Natural killer cell (primary cell): ENCODE measurements at regions of chr2 and their contacts with region 1.

Region 1: GRCh38 chr2:214809751-214810564 is 475 bp upstream of the BARD1 start:
- DNase-seq: peak; percentile 96 to 97
- ATAC-seq: peak; percentile 87 to 96 (median 88)
- H3K4me3 ChIP-seq: peak overlapping the region; percentile 98
- H3K4me3 Mint-ChIP-seq: peak overlapping the region; percentile 98
- H3K27ac ChIP-seq: peak overlapping the region; percentile 68
- H3K27ac Mint-ChIP-seq: peak overlapping the region; percentile 91 to 92
- H3K4me1 ChIP-seq: peaks cover 9% of the 10 kb centered on the region
- H3K4me1 Mint-ChIP-seq: peaks cover 16 to 37% of the 10 kb centered on the region in 2 donors
- H3K27me3 ChIP-seq: no peaks in the 10 kb centered on the region
- H3K27me3 Mint-ChIP-seq: peaks cover 0 to 9% of the 10 kb centered on the region in 2 donors
- CTCF ChIP-seq: no peak

Region 2: DNA sequence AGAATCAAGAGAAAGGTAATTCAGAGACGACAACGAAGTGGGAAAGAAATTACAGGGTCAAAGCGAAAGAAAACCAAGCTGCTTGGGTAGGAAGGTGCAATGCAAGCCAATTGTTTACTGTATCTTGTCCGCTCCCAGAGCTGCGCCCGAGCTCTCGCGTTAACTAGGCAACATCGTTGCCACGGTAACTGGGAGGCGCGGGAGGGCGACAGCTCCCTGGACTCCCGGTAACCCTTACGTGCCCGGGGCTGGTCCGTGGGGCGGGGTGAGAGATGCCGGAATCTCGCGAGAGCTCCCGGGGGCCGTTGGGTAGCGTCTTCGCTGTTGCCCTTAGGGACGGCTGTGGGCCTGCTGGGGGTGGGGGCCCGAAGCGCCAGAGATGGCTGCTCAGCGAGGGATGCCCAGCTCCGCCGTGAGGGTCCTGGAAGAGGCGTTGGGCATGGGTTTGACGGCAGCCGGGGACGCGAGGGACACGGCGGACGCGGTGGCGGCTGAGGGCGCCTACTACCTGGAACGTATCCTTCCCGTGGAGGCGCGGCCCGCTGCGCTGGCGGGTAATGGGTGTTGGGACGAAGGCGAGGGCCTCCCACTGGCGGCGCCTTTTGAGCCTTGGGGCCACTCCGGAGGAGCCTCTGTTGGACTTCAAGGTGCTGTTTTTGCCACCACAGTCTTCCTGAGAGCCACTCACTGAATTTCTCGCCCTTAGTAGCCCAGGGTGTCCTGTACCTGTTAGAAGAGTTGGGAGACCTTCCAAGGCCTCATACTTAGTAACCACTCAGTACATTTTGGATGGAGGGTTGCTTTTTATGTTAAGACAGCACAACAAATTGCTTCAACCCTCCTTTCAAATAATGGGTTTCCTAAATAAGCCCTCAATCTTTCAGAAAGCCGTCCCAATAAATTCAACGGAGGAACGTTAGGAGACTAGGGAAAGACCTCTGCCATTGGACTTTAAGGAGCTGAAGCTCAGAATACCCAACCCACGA is 1525.6 kb before region 1 on chr2 and contains the start of gene SPAG16:
- intact Hi-C with region 1: loop called (anchors 5 kb)
- DNase-seq: peak; percentile 88 to 97
- ATAC-seq: peak; percentile 95 to 98 (median 95)
- H3K4me3 ChIP-seq: peak within 1 kb of the TSS; percentile 65
- H3K4me3 Mint-ChIP-seq: peak within 1 kb of the TSS; percentile 93
- H3K27ac ChIP-seq: peak within 1 kb of the TSS; percentile 57
- H3K27ac Mint-ChIP-seq: peak within 1 kb of the TSS; percentile 85 to 93
- H3K4me1 ChIP-seq: peaks cover 6% of the 10 kb centered on the region
- H3K4me1 Mint-ChIP-seq: peaks cover 35 to 37% of the 10 kb centered on the region in 2 donors
- H3K27me3 ChIP-seq: no peaks in the 10 kb centered on the region
- H3K27me3 Mint-ChIP-seq: peaks cover 0 to 9% of the 10 kb centered on the region in 2 donors
- CTCF ChIP-seq: no peak
- total RNA-seq, gene SPAG16: 3.5 to 5.8 (median 4.0) TPM

Region 3: DNA sequence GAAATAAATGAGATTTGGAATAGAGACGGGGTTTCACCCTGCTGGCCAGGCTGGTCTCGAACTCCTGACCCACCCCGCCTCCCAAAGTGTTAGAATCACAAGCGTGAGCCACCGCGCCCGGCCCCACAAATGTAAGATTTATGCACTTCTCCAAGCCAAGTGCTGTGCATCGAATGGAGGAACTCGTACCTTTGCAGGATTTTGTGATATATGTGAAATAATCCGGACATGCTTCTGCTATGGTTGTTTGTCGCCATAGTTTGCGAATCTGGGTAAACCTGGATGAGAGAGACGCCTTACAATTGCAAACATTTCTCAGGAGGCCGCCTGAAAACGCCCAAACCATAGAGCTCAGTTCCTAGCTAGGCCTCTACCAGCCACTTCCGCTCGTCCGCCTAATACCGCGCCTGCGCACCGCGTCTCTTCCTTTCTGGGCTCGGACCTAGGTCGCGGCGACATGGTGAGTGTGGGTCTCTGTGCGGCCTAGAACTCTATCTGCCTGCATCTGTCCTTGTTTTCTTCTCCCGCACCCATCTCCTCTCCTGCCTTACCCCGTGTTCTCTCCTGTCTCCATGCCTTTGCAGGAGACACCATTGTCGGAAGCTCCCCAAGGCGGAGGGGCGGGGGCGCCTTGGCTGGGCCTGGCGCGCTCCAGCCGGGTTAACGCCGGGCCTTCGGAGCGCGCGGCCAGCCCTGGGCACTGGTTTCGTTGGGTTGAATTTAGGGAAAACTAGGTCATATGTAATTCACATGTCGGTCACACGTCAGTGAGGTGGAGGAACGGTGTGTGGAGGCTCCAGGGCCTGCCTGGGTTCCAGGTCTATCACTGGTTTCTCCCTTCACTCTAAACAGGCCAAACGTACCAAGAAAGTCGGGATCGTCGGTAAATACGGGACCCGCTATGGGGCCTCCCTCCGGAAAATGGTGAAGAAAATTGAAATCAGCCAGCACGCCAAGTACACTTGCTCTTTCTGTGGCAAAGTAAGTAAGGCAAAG is 1688.8 kb after region 1 on chr2 and contains the start of gene RPL37A:
- intact Hi-C with region 1: loop called (anchors 5 kb)
- DNase-seq: peak; percentile 84 to 96
- ATAC-seq: peak; percentile 96 to 97 (median 97)
- H3K4me3 ChIP-seq: peak within 1 kb of the TSS; percentile 89
- H3K4me3 Mint-ChIP-seq: peak within 1 kb of the TSS; percentile 96
- H3K27ac ChIP-seq: peak within 1 kb of the TSS; percentile 78
- H3K27ac Mint-ChIP-seq: peak within 1 kb of the TSS; percentile 92 to 98
- H3K4me1 ChIP-seq: peaks cover 19% of the 10 kb centered on the region
- H3K4me1 Mint-ChIP-seq: peaks cover 40 to 52% of the 10 kb centered on the region in 2 donors
- H3K27me3 ChIP-seq: no peaks in the 10 kb centered on the region
- H3K27me3 Mint-ChIP-seq: no peaks in the 10 kb centered on the region
- CTCF ChIP-seq: no peak
- total RNA-seq, gene RPL37A: 1,429 to 1,793 (median 1,744) TPM